ENCODE measurements at regions of chr6 and their contacts with region 1.

Region 1: GRCh38 chr6:163427498-163428254 is 13.2 kb downstream of the QKI start:
- DNase-seq: no peak
- ATAC-seq: peak in 3 of 4 donors; percentile 49 to 55 (median 50)
- H3K4me3 ChIP-seq: peak overlapping the region; percentile 44
- H3K27ac ChIP-seq: peak overlapping the region; percentile 62
- H3K4me1 ChIP-seq: peaks cover 91% of the 10 kb centered on the region
- H3K27me3 ChIP-seq: no peaks in the 10 kb centered on the region
- CTCF ChIP-seq: peak; percentile 55

Region 2: GRCh38 chr6:163387317-163387716 is 40.4 kb before region 1 on chr6:
- intact Hi-C with region 1: no loop called
- DNase-seq: no peak
- ATAC-seq: peak in 3 of 4 donors; percentile 13 to 40 (median 37)
- H3K4me3 ChIP-seq: no peak overlapping the region
- H3K27ac ChIP-seq: no peak overlapping the region
- H3K4me1 ChIP-seq: no peaks in the 10 kb centered on the region
- H3K27me3 ChIP-seq: no peaks in the 10 kb centered on the region
- CTCF ChIP-seq: no peak

Region 3: GRCh38 chr6:163443985-163444533 is 16.4 kb after region 1 on chr6:
- intact Hi-C with region 1: no loop called
- DNase-seq: no peak
- ATAC-seq: peak in 3 of 4 donors; percentile 29 to 46 (median 46)
- H3K4me3 ChIP-seq: peak overlapping the region; percentile 20
- H3K27ac ChIP-seq: peak overlapping the region; percentile 51
- H3K4me1 ChIP-seq: peaks cover 81% of the 10 kb centered on the region
- H3K27me3 ChIP-seq: no peaks in the 10 kb centered on the region
- CTCF ChIP-seq: no peak

Region 4: GRCh38 chr6:163457637-163458561 is 30.2 kb after region 1 on chr6:
- intact Hi-C with region 1: no loop called
- DNase-seq: peak in 1 of 2 donors; percentile 20
- ATAC-seq: peak; percentile 87 to 95 (median 93)
- H3K4me3 ChIP-seq: peak overlapping the region; percentile 20
- H3K27ac ChIP-seq: peak overlapping the region; percentile 73
- H3K4me1 ChIP-seq: peaks cover 95% of the 10 kb centered on the region
- H3K27me3 ChIP-seq: no peaks in the 10 kb centered on the region
- CTCF ChIP-seq: no peak

Region 5: DNA sequence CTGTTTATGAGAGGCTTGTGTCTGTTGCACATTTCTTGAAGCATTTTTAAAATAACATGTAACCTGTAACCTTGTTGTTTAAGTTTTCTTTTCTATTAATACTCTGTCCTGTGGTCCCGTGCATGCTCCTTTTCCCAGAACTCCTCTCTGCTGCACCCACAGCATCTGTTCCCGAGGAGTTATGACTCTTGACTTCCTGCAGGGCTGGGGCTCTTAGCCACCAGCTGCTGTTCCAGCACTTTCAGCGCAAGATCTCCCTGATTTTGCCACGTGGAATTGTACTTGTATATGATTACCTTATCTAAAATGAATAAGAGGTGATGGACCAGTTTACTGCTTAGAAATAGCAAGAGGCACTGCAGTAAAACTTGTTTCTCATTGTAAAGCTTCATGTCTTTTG is 137.5 kb after region 1 on chr6:
- intact Hi-C with region 1: loop called in 1 of 2 experiments (anchors 5 kb)
- DNase-seq: no peak
- ATAC-seq: peak; percentile 54 to 81 (median 78)
- H3K4me3 ChIP-seq: no peak overlapping the region
- H3K27ac ChIP-seq: peak overlapping the region; percentile 60
- H3K4me1 ChIP-seq: peaks cover 59% of the 10 kb centered on the region
- H3K27me3 ChIP-seq: no peaks in the 10 kb centered on the region
- CTCF ChIP-seq: no peak

Region 6: DNA sequence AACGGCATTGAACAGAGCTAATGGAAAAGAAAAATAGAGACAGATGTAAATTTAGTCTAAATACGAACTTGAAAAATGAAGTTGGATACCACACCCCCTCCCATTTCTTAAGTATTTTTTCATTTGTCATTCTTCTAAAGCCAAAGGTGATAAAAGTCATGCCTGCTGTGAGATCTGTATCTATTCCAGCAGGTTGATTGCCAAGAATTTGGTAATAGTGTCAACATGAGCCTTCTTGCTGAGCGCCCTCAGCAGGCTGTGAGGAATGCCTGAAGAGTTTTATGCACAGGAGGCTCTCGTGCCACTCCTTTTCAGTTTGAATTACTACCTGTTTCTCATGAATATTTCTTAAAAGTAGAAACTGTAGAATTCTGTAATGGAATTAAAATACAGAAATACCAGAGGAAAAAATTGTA is 152.2 kb after region 1 on chr6:
- intact Hi-C with region 1: loop called in 1 of 2 experiments (anchors 5 kb)
- DNase-seq: no peak
- ATAC-seq: peak; percentile 50 to 70 (median 65)
- H3K4me3 ChIP-seq: no peak overlapping the region
- H3K27ac ChIP-seq: peak overlapping the region; percentile 83
- H3K4me1 ChIP-seq: peaks cover 55% of the 10 kb centered on the region
- H3K27me3 ChIP-seq: no peaks in the 10 kb centered on the region
- CTCF ChIP-seq: peak; percentile 31

Region 7: DNA sequence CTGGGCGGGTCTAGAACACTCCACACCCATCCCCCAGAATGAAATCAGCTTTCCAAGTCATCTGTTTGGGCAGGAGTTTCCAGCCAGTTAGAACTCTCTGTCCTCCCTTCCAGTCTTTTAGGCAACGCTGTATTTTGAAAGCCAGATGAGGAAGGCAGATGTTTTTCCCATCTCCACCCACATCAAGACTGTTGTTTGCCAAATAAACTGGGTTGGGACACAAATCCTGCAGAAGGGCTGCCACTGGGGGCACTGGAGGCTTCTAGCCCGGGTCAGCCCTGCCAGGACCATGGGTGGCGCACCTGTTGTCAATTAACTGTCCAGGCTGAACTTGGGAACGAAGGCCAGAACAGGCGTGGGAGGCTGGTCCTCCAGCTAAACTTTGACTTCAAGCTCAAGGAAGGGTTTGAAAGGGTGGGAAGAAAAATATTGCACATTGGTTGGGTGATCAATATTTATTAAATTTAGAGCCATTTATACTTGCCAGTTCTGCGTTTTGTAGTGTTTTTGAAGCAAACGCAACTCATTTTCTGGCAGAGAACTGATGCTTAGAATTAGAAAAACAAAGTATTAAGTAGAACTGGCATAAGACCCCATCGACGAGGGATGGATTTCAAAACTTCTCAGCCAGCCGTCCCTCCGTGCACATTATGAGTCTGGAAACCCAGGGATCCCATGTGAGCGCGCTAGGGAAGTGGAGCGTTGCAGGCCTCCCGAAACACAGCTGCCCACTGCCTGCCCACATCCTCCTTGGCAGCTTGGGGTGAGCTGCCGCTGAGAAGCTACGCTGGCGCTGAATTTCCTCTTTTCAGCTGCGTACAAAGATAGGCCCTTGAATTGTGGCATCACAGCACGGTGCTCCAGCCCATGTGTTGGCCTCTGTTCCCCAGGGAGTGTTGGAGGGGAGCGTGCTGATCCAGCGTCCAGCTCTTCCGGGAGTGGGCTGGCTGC is 284.2 kb after region 1 on chr6:
- intact Hi-C with region 1: loop called in 1 of 2 experiments (anchors 10 kb)
- DNase-seq: peak; percentile 94 to 95
- ATAC-seq: peak; percentile 66 to 86 (median 82)
- H3K4me3 ChIP-seq: no peak overlapping the region
- H3K27ac ChIP-seq: peak overlapping the region; percentile 76
- H3K4me1 ChIP-seq: peaks cover 61% of the 10 kb centered on the region
- H3K27me3 ChIP-seq: no peaks in the 10 kb centered on the region
- CTCF ChIP-seq: peak; percentile 48

Region 8: DNA sequence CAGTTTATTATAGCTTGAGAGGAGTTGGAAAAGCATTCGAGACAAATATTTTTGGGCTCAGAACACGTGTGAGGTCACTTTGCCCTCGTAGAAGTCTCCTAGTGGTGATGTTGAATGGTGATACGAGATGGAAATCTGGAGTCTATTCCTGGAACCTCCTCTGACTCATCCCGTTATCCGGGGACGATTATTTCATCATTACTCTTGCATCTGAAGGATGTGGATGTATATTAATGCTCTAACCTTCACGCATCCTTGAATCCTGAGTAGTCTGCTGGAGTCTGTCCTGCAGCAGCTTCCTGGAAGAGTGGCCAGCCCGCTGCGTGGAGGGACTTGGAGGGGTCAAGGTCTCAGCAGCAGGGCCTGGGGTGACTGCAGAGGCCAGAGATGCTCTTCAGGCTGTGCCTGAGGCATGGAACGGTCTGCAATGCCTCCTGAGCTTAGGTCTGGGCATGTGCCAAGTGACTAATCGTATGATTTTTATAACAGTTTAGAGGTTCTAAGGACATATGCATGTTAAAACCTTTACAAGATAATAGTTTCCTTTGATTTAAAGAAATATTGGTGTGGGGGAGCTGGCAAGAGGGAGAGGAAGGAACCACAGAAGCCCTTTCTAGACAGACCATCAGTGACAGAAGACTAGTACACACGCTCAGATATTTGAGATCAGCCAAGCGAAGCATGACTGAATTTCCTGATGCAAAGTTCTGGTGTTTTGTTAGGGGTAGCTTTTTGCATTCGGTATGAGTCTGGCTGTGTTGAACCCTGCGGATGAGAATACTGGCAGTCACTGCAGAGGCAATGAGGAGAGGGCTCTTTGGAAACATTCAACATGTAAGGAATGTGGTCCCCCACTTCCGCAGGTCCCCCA is 387.1 kb after region 1 on chr6:
- intact Hi-C with region 1: loop called in 1 of 2 experiments (anchors 10 kb)
- DNase-seq: peak; percentile 71 to 83
- ATAC-seq: peak; percentile 93 to 97 (median 96)
- H3K4me3 ChIP-seq: peak overlapping the region; percentile 5
- H3K27ac ChIP-seq: peak overlapping the region; percentile 92
- H3K4me1 ChIP-seq: peaks cover 28% of the 10 kb centered on the region
- H3K27me3 ChIP-seq: no peaks in the 10 kb centered on the region
- CTCF ChIP-seq: peak; percentile 34

Region 9: DNA sequence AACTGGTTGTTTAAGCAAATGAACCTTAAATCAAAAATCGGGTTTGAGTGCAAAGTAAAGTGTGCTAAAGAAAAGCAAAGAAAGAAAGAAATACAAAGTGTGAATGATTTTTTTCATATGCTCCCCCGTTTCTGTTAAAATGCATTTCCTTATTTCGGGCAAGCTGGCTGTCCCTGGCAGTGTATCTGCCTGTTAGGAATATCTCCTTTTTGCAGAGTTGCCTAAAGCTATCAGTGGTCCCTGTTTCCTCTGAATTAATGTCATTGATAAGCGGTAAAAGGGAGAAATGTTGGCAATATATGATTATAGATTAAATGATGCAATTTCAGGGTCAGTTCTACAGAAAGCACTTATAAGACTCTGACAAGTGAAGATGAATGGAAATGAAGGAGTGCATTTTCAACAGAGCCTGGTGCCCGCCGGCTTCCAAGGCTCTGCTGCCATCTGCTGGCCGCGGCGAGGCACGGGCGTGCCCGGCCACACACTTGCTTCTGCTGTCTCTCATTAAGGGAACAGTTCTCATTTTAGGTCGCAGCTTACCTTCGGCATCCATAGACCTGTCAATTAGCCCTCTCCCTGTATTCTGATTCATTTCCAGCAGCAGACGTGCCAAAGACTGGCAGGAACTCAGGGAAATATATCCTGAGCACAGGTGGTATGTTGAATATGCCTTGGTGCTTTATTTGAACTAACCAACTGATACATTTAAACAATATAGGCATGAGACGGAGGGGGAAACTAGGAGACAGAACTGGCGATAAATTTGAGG is 1499.8 kb after region 1 on chr6:
- intact Hi-C with region 1: loop called in 1 of 2 experiments (anchors 5 kb)
- DNase-seq: peak; percentile 57 to 84
- ATAC-seq: peak; percentile 90 to 99 (median 96)
- H3K4me3 ChIP-seq: peak overlapping the region; percentile 52
- H3K27ac ChIP-seq: no peak overlapping the region
- H3K4me1 ChIP-seq: peaks cover 6% of the 10 kb centered on the region
- H3K27me3 ChIP-seq: no peaks in the 10 kb centered on the region
- CTCF ChIP-seq: peak; percentile 99